PC-9 (cell line): ENCODE measurements at regions of chr6 and their contacts with region 1.

Region 1: DNA sequence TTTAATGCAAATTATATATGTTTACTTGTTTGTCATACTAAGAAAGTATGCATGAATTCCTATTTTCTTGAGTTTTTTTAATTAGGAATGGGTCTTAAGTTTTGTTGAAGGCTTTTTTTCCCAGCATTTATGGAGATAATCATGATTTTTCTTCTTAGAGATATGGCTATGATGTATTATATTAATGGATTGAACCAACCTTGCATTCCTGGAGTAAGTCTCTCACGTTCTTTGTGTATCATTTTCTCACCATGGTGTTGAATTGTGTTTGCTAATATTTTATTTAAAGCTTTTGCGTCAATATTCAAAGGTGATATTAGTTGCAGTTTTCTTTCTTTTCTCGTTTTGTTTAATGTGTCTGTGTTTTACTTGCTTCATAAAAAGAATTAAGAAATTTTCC is 48.4 kb upstream of the SLC35D3 start:
- DNase-seq: no peak
- H3K4me3 ChIP-seq: no peak overlapping the region
- H3K27ac ChIP-seq: no peak overlapping the region
- H3K4me1 ChIP-seq: no peaks in the 10 kb centered on the region
- H3K27me3 ChIP-seq: no peaks in the 10 kb centered on the region
- CTCF ChIP-seq: no peak

Region 2: GRCh38 chr6:136846046-136846445 is 27.7 kb before region 1 on chr6:
- CTCF ChIA-PET with region 1: interaction called, 14 read pairs
- POLR2A ChIA-PET with region 1: no interaction called
- intact Hi-C with region 1: no loop called
- DNase-seq: peak; percentile 12 to 50
- H3K4me3 ChIP-seq: no peak overlapping the region
- H3K27ac ChIP-seq: no peak overlapping the region
- H3K4me1 ChIP-seq: no peaks in the 10 kb centered on the region
- H3K27me3 ChIP-seq: no peaks in the 10 kb centered on the region
- CTCF ChIP-seq: peak; percentile 89